ENCODE measurements at regions of chr16 and their contacts with region 1.

Region 1: DNA sequence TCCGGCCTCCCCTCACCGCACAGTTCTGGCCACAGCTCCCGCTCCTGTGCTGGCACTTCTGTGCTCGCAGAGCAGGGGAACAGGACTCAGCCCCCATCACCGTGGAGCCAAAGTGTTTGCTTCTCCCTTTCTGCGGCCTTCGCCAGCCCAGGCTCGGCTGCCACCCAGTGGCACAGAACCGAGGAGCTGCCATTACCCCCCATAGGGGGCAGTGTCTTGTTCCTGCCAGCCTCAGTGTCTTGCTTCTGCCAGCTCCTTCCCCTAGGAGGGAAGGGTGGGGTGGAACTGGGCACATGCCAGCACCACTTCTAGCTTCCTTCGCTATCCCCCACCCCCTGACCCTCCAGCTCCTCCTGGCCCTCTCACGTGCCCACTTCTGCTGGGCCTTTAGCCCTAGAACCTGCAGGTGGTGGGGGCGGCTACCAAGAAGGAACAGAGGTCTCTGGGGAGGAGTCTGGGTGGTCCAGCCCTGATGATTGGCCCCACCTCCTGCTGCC is 645 bp upstream of the ELMO3 start:
- DNase-seq: no peak
- H3K4me3 ChIP-seq: no peak overlapping the region
- H3K27me3 ChIP-seq: no peaks in the 10 kb centered on the region
- CTCF ChIP-seq: peak; percentile 71

Region 2: DNA sequence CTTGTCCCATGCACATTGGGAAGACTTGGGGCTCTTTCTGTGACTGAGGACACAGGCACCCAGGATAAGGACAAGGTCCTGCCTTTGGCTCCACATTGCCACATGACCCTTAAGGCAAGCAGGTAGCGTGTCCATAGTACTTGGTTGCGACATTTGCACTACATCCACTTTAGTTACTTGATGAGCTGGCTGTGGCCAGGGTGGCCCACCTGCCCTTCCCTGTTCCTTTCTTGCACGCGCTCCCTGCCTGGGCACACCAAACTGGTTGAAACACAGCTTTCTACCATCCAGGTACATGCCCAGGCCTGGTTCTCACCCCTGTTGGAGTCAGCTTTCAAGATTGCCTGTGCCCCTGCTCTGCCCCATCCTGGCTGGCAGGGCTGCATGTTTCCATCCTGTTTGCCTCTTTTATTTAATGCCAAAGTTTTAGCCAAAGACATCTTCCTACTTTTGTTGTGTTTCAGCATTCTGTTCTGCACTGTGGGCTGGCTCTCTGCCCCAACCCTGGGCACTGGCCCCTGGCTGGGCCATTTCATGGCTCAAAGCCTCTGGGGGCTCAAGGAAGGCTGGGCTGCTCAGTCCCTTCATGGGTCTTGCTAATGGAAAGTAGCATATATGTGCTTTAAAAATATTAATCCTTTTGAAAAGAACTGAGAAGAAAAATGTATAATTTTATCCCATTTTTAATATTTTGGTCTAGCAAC is 50.7 kb before region 1 on chr16:
- CTCF ChIA-PET with region 1: no interaction called
- POLR2A ChIA-PET with region 1: no interaction called
- DNase-seq: no peak
- H3K4me3 ChIP-seq: no peak overlapping the region
- H3K27me3 ChIP-seq: no peaks in the 10 kb centered on the region
- CTCF ChIP-seq: no peak

Region 3: GRCh38 chr16:67210069-67210937 is 12.0 kb after region 1 on chr16:
- CTCF ChIA-PET with region 1: interaction called, 10 read pairs
- POLR2A ChIA-PET with region 1: no interaction called
- DNase-seq: no peak
- H3K4me3 ChIP-seq: no peak overlapping the region
- H3K27me3 ChIP-seq: no peaks in the 10 kb centered on the region
- CTCF ChIP-seq: no peak